Esophagus muscularis mucosa (tissue), 4 donors: ENCODE measurements at regions of chr20 and their contacts with region 1.

Region 1: DNA sequence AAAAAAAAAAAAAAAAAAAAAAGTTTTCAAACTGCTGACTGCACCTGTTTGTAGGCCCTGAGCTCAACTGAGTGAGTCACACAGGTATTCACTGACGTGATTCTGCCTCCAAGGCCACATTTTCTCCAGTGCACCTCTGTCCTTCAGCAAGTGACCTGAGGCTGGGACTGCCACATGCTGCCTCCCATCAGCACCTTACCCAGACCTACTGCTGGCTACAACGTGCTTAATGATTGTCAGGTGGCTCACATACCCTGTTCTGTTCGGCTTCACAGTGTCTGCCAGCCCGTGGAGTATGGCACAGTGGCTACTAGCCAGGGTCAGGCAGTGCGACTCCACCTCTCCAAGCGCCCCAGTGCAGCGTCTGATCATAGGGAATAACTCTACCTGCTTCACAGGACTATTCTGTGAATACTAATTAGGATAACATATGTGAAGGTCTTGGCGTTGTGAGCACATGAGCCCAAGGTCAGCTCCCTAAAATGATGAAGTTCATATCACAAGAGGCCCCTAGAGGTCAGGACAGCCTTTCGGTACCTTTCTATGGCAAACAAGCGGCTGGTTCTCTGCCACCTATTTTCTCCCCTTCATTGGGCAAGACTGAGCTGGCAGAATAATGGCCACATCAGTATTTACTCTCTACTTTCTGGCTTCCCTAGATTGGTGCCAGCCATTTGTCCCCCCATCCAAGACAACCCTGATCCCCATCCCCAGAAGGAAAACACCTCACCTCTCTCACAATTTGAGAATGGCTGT is 28.1 kb downstream of the RIPOR3 start:
- DNase-seq: no peak
- H3K4me3 ChIP-seq: no peak overlapping the region
- H3K27ac ChIP-seq: peak overlapping the region in 2 of 4 donors; percentile 66 to 73
- H3K4me1 ChIP-seq: peaks cover 18 to 47% (median 37%) of the 10 kb centered on the region in 4 donors
- H3K27me3 ChIP-seq: no peaks in the 10 kb centered on the region
- CTCF ChIP-seq: no peak
- EP300 ChIP-seq: no peak
- POLR2A ChIP-seq: no peak

Region 2: GRCh38 chr20:50713657-50714101 is 50.4 kb after region 1 on chr20:
- intact Hi-C with region 1: loop called (anchors 5 kb)
- DNase-seq: no peak
- H3K4me3 ChIP-seq: no peak overlapping the region
- H3K27ac ChIP-seq: no peak overlapping the region
- H3K4me1 ChIP-seq: peaks cover 0 to 4% (median 0%) of the 10 kb centered on the region in 4 donors
- H3K27me3 ChIP-seq: no peaks in the 10 kb centered on the region
- CTCF ChIP-seq: peak; percentile 28 to 42 (median 31)
- EP300 ChIP-seq: no peak
- POLR2A ChIP-seq: no peak

Region 3: DNA sequence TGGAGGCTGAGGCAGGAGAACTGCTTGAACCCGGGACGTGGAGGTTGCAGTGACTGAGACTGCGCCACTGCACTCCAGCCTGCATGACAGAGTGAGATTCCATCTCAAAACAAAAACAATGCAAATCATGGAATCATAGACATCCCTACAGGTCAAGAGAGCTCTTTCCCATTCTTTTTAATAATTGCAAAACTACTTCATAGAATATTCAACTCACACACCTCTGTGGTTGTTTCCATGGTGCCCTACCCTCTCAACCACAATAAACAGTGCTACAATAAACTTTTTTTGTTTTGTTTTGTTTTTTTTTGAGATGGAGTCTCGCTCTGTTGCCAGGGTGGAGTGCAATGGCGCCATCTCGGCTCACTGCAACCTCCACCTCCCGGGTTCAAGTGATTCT is 279.8 kb after region 1 on chr20:
- intact Hi-C with region 1: no loop called
- DNase-seq: no peak
- H3K4me3 ChIP-seq: no peak overlapping the region
- H3K27ac ChIP-seq: no peak overlapping the region
- H3K4me1 ChIP-seq: no peaks in the 10 kb centered on the region
- H3K27me3 ChIP-seq: no peaks in the 10 kb centered on the region
- CTCF ChIP-seq: no peak
- EP300 ChIP-seq: no peak
- POLR2A ChIP-seq: no peak